Posterior vena cava (tissue), 2 donors: ENCODE measurements at regions of chr4 and their contacts with region 1.

Region 1: DNA sequence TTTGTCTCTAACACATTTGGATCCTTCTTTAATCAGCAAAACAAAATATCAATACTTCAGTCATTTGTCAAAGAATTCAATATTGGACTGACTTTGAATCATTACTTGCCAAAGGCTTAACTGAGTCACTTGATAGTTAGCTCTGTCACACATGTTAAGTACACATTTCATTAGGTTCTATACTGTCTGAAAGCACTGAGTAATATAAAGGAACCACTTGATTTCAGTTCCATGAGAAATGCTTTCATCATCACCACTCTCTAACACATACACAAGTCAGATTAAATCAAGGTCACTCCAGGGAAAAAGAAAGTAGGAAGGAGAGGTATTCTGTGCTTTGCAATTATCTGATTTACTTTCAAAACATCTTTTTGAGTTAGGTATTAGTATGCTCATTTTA is 1233.1 kb downstream of the C4orf33 start:
- DNase-seq: no peak

Region 2: DNA sequence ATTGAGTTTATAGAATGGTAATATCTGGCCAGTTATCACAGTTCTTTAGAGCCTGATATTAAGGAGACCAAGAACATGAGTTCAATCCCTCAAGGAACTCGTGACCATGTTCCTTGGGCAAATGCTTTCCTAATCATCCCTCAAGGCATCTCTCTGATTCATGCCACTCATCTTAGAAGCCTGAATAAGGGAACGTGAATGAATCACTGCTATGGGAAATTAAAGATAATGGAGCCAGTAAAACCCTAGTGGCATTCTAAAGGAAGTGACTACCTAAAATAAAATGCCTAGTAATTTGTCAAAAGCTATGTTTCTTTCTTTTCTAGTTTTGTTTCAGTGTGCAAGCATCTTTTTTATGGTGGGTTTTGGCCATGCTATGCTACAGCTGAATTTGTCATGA is 71.8 kb before region 1 on chr4:
- intact Hi-C with region 1: no loop called
- DNase-seq: no peak

Region 3: DNA sequence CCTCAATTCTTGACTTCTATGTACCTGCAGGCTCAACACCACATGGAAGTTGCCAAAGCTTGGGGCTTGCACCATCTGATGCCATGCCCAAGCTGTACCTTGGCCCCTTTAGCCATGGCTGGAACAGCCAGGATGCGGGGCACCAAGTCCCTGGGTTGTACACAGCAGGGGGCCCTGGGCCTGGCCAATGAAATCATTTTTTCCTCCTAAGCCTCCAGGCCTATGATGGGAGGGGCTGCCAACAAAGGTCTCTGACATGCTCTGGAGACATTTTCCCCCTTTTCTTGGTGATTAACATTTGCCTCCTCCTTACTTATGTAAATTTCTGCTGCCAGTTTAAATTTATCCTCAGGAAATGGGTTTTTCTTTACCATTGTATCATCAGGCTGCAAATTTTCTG is 195.0 kb after region 1 on chr4:
- intact Hi-C with region 1: loop called in 1 of 2 experiments (anchors 5 kb)
- DNase-seq: no peak